Activated B cell treated with CpG ODN at 0.5 μM for 24 hours (primary cell): ENCODE measurements at regions of chr12 and their contacts with region 1.

Region 1: GRCh38 chr12:101876861-101877815 is at the start of gene DRAM1:
- DNase-seq: peak; percentile 77
- ATAC-seq: peak; percentile 93
- H3K4me3 Mint-ChIP-seq: peak within 1 kb of the TSS; percentile 90
- H3K27ac Mint-ChIP-seq: peak within 1 kb of the TSS; percentile 75
- H3K4me1 Mint-ChIP-seq: peaks cover 19% of the 10 kb centered on the region
- H3K27me3 Mint-ChIP-seq: no peaks in the 10 kb centered on the region
- CTCF ChIP-seq: no peak
- total RNA-seq, gene DRAM1: 9.6 and 11.5 TPM in 2 replicates

Region 2: DNA sequence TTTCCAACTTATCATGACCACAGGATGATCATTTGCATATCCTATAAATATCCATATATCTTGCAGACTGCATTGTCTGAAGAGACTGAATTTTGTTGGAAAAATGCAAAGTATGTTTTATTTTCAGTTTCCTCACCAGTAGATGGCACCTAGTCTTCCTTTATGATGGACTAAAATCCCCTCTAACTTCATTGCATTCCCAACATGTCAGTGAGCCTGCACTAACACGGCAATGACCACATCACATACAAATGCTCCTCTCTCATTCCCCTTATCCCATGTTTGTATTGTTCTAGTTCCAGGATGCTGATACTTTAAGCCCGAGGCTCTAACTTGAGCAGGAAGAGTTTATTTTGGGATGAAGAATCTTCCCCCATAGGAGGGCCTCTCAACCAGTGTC is 307.1 kb before region 1 on chr12:
- CTCF ChIA-PET with region 1: no interaction called
- POLR2A ChIA-PET with region 1: no interaction called
- intact Hi-C with region 1: no loop called
- DNase-seq: no peak
- ATAC-seq: peak; percentile 34
- H3K4me3 Mint-ChIP-seq: no peak overlapping the region
- H3K27ac Mint-ChIP-seq: no peak overlapping the region
- H3K4me1 Mint-ChIP-seq: peaks cover 4% of the 10 kb centered on the region
- H3K27me3 Mint-ChIP-seq: peaks cover 7% of the 10 kb centered on the region
- CTCF ChIP-seq: no peak

Region 3: GRCh38 chr12:101839324-101840283 is 37.5 kb before region 1 on chr12:
- CTCF ChIA-PET with region 1: interaction called, 3 read pairs
- POLR2A ChIA-PET with region 1: interaction called, 3 read pairs
- intact Hi-C with region 1: loop called (anchors 2 kb)
- DNase-seq: no peak
- ATAC-seq: peak; percentile 82
- H3K4me3 Mint-ChIP-seq: no peak overlapping the region
- H3K27ac Mint-ChIP-seq: no peak overlapping the region
- H3K4me1 Mint-ChIP-seq: peaks cover 21% of the 10 kb centered on the region
- H3K27me3 Mint-ChIP-seq: no peaks in the 10 kb centered on the region
- CTCF ChIP-seq: peak; percentile 77

Region 4: GRCh38 chr12:101891462-101892273 is 14.5 kb after region 1 on chr12:
- CTCF ChIA-PET with region 1: no interaction called
- POLR2A ChIA-PET with region 1: interaction called, 8 read pairs
- intact Hi-C with region 1: loop called (anchors 1 kb)
- DNase-seq: no peak
- ATAC-seq: peak; percentile 89
- H3K4me3 Mint-ChIP-seq: no peak overlapping the region
- H3K27ac Mint-ChIP-seq: peak overlapping the region; percentile 24
- H3K4me1 Mint-ChIP-seq: peaks cover 11% of the 10 kb centered on the region
- H3K27me3 Mint-ChIP-seq: no peaks in the 10 kb centered on the region
- CTCF ChIP-seq: no peak

Region 5: DNA sequence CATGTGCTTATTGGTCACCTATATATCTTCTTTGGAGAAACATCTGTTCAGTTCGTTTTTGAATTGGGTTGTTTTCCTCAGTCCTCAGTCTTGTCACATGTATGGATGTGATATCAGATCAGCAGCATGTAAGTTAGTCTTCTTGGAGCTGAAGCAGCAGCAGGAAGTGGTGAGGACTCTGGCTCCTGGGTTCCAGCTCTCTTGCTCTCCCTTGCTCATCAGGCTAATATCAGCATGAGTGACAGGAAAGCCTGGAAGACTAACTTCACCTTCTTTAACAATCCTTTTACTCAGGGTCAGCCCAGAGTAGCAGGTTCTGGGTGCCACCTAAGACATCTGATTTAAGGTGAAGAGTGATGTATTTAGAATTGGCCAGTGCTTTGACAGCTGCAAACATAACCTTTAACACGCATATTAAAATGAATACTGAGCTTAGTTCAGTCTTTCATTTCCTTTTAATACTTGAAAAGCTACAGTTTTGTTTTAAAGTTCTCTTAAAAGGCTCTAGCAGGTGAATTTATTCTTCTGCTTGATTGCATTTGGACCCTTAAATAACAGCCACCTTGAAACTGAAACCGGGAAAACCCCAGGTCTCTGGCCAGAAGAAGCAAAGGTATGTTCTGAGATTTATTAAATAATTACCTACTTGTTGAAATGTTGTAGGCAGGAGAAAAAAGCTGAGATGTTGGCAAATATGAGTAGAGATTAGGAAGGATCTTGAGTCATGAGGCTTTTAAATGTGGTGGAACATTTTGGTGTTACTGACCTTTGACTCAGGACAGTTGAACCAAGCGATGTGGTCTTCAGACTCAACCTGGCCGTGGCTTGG is 54.6 kb after region 1 on chr12:
- CTCF ChIA-PET with region 1: no interaction called
- POLR2A ChIA-PET with region 1: interaction called, 11 read pairs
- intact Hi-C with region 1: loop called (anchors 1 kb)
- DNase-seq: no peak
- ATAC-seq: peak; percentile 63
- H3K4me3 Mint-ChIP-seq: peak overlapping the region; percentile 33
- H3K27ac Mint-ChIP-seq: peak overlapping the region; percentile 82
- H3K4me1 Mint-ChIP-seq: peaks cover 87% of the 10 kb centered on the region
- H3K27me3 Mint-ChIP-seq: no peaks in the 10 kb centered on the region
- CTCF ChIP-seq: no peak

Region 6: DNA sequence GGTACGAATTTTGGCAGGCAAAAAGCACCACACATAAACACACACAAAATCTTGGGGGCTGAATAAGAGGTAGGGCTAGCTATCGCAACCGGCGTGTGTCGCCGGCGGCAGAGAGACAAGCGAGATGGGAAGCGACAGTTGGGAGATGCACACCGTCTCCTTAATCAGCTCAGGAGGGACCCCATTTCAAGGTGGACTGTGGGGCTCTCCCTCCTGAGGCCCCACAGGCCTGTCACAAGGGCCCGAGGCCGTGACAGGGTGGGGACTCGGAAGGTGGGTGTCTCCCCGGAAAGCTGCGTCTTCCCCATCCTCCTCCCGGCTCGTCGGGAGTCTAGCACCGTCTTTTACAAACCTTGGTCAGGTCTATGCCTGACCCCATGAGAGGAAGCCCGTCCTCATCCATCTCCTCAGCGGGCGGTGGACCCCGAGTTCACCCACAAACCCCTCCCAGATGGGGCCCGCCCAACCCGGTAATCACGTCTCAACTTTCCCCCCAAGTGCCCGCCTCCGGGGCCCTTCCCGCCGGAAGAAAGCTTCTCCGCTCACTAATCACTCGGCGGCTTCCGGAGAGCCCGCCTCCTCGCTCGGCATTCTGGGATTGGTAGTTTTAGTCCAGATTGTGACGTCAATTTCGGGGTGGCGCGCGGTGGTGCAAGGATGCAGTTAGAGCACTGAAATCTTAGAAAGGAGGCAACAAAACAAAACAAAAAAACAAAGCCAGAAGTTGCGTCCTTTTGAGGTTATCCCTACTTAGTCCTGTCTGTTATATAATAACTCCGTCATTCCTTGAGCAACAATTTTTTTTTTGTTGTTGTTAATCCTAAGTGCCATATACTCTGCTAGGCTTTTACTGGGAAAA is 184.7 kb after region 1 on chr12 and contains the start of gene WASHC3:
- CTCF ChIA-PET with region 1: no interaction called
- POLR2A ChIA-PET with region 1: interaction called, 5 read pairs
- intact Hi-C with region 1: loop called (anchors 1 kb)
- DNase-seq: peak; percentile 89
- ATAC-seq: peak; percentile 95
- H3K4me3 Mint-ChIP-seq: peak within 1 kb of the TSS; percentile 98
- H3K27ac Mint-ChIP-seq: peak within 1 kb of the TSS; percentile 97
- H3K4me1 Mint-ChIP-seq: peaks cover 21% of the 10 kb centered on the region
- H3K27me3 Mint-ChIP-seq: no peaks in the 10 kb centered on the region
- CTCF ChIP-seq: no peak
- total RNA-seq, gene WASHC3: 47.3 and 50.6 TPM in 2 replicates

Region 7: DNA sequence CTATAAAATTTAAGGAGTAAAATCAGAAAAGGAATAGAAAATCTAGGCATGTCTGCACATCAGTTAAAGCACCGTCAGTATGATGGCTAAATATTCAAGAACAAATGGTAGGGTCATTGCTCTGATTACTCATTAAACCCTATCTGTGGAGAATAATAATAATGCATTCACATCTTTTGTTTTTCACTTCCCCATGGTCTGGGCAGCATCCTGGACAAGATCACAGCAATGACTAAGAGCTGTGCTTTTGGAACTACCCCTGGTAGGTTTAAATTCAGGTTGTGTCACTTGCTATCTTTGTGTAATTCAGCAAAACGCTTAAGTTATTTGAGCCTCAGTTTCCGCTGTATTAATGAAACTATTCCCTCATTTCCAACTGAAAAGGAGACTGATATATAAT is 1585.5 kb after region 1 on chr12:
- CTCF ChIA-PET with region 1: no interaction called
- POLR2A ChIA-PET with region 1: no interaction called
- intact Hi-C with region 1: no loop called
- DNase-seq: no peak
- ATAC-seq: peak; percentile 92
- H3K4me3 Mint-ChIP-seq: no peak overlapping the region
- H3K27ac Mint-ChIP-seq: peak overlapping the region; percentile 7
- H3K4me1 Mint-ChIP-seq: peaks cover 32% of the 10 kb centered on the region
- H3K27me3 Mint-ChIP-seq: no peaks in the 10 kb centered on the region
- CTCF ChIP-seq: no peak